Dendritic cell treated with granulocyte-macrophage colony-stimulating factor and Interleukin-4, amounts not matched to agents 40 ng/mL and 50 ng/mL, for 4 days (primary cell): ENCODE measurements at regions of chr20 and their contacts with region 1.

Region 1: GRCh38 chr20:32762149-32762753 is at the start of gene DNMT3B:
- H3K4me3 Mint-ChIP-seq: peak within 1 kb of the TSS; percentile 90
- H3K27ac Mint-ChIP-seq: peak within 1 kb of the TSS; percentile 74
- H3K4me1 Mint-ChIP-seq: peaks cover 22% of the 10 kb centered on the region
- H3K27me3 Mint-ChIP-seq: peaks cover 31% of the 10 kb centered on the region

Region 2: GRCh38 chr20:32743237-32744112 is 18.8 kb before region 1 on chr20 and contains the start of gene COMMD7:
- intact Hi-C with region 1: loop called (anchors 2 kb)
- H3K4me3 Mint-ChIP-seq: peak within 1 kb of the TSS; percentile 99
- H3K27ac Mint-ChIP-seq: peak within 1 kb of the TSS; percentile 97
- H3K4me1 Mint-ChIP-seq: peaks cover 27% of the 10 kb centered on the region
- H3K27me3 Mint-ChIP-seq: no peaks in the 10 kb centered on the region

Region 3: DNA sequence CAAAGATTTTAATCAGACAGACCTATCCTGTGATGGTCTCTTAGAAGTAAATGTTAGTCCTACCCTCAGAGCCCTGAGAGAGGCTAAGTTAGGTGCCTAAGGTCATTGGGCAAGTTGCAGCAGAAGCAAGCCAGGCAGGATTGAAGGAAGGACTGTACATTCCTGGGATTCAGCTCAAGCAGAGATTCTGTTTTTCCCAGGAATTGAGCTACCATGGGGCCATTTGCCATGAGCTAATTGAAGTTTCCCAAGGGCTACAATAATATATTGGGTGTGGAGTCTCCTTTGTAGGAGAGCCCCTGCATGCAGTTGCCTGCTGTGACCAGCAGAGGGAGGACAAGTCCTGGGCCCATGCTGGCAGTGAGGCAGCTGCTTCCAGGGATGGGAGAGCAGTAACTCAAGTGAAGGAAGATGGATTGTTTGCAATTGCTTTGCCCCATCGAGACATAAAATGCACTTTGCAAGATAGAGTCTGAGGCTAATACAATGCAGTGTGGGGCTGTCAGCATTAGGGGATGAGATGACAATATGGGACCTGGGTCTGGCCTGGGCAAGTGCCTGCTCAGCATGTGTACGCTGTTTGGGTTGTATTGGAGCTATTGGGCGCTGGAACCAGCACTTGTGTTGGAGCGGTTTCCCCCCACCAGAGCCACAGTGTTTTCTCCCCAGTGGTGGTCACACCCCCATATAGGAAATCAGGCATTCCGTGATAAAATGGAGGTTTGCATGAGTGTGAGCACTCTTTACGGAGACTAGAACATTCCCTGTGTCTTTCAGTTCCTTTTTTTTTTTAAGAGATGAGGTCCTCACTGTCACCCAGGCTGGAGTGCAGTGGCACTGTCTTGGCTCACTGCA is 27.9 kb after region 1 on chr20:
- intact Hi-C with region 1: no loop called
- H3K4me3 Mint-ChIP-seq: no peak overlapping the region
- H3K27ac Mint-ChIP-seq: no peak overlapping the region
- H3K4me1 Mint-ChIP-seq: peaks cover 9% of the 10 kb centered on the region
- H3K27me3 Mint-ChIP-seq: no peaks in the 10 kb centered on the region